Activated CD4-positive, alpha-beta T cell treated with anti-CD3 and anti-CD28 coated beads, Interleukin-2, amount 10 ng/mL, durations not matched to agents 24 days and 14 days (primary cell): ENCODE measurements at regions of chr17 and their contacts with region 1.

Region 1: DNA sequence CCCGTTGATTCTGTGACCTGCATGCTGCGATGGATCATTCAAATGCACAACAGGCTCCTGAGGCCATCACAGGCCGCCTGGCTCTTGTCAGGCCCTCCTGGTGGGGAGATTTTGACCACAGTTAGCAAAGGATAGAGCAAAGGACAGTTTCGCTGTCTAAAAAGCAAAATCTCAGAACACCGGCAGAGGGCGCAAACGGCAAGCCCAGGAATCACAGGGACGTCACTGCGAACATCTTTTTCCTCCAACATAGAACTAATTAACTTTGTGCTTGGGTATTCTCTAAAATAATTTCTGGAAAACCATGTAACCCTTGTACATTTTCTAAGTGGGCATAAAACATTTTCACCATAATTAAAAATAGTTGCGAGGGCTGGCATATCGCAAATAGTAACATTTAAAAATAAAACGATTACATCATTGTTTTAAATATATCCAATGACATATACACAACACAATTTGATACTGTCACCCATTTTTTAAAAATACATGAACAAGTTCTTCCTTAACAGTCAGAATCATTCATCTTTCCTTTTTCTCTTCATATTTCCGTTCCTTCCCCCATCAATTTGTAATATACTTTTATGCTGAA is 19.7 kb upstream of the SLC47A1 start:
- DNase-seq: peak; percentile 89
- H3K4me3 Mint-ChIP-seq: no peak overlapping the region
- H3K27ac Mint-ChIP-seq: no peak overlapping the region
- H3K4me1 Mint-ChIP-seq: peaks cover 7% of the 10 kb centered on the region
- H3K27me3 Mint-ChIP-seq: no peaks in the 10 kb centered on the region

Region 2: GRCh38 chr17:19648475-19649406 is 134.7 kb after region 1 on chr17 and contains the start of gene ALDH3A2:
- intact Hi-C with region 1: loop called (anchors 1 kb)
- DNase-seq: peak; percentile 98
- H3K4me3 Mint-ChIP-seq: peak within 1 kb of the TSS; percentile 89
- H3K27ac Mint-ChIP-seq: peak within 1 kb of the TSS; percentile 91
- H3K4me1 Mint-ChIP-seq: peaks cover 36% of the 10 kb centered on the region
- H3K27me3 Mint-ChIP-seq: peaks cover 9% of the 10 kb centered on the region
- total RNA-seq, gene ALDH3A2: 32.8 and 34.3 TPM in 2 replicates